ENCODE measurements at regions of chr12 and their contacts with region 1.

Region 1: DNA sequence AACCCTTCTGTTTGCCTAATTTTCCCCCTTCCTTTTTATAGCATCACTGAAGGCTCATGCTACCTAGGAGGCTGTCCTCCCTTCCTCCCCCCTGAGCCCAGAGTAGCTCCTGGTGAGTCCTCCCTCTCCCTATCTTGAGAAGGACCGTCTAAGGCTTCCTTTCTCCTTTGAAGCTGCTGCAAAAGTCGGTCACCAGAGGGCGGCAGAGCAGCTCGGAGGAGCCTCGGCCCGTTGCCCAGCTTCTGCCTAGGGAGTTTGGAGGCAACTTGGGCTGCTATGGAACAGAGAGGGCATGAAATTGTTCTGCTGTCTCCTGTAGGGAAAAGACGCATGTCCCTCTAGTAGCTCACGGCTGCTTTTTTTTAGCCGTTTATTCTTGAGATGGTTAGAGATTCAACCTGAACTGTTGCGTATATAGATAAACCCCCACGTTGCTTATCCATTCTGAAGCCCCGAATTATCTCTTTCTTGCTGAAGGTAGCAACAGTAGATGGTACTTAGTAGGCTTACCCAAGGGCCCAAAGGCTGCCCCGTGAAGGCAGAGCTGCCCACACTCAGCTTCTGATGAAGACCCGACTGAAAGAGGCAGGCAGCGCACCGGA is 5.7 kb downstream of the WNT5B start:
- DNase-seq: peak; percentile 70
- CTCF ChIP-seq: peak; percentile 86

Region 2: DNA sequence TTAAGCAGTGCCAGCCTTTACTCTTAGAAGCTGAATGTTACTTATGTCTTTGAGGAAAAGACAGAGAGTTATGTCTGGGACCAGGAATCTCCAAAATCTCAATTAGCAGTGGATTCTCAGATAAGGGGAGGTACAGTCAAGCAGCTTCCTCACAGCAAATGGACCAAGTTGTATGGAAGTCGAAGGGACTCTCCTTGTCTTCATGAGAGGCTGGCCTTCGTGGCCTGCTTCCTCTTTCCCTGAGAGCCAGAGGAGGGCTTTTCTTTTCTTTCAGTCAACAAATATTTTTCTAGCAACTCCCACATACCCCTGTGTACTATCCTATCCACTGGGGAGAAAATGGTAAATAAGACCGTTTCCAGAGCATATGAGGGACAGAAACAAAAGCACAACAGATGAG is 12.3 kb before region 1 on chr12:
- CTCF ChIA-PET with region 1: interaction called, 24 read pairs
- POLR2A ChIA-PET with region 1: no interaction called
- DNase-seq: no peak
- CTCF ChIP-seq: no peak

Region 3: DNA sequence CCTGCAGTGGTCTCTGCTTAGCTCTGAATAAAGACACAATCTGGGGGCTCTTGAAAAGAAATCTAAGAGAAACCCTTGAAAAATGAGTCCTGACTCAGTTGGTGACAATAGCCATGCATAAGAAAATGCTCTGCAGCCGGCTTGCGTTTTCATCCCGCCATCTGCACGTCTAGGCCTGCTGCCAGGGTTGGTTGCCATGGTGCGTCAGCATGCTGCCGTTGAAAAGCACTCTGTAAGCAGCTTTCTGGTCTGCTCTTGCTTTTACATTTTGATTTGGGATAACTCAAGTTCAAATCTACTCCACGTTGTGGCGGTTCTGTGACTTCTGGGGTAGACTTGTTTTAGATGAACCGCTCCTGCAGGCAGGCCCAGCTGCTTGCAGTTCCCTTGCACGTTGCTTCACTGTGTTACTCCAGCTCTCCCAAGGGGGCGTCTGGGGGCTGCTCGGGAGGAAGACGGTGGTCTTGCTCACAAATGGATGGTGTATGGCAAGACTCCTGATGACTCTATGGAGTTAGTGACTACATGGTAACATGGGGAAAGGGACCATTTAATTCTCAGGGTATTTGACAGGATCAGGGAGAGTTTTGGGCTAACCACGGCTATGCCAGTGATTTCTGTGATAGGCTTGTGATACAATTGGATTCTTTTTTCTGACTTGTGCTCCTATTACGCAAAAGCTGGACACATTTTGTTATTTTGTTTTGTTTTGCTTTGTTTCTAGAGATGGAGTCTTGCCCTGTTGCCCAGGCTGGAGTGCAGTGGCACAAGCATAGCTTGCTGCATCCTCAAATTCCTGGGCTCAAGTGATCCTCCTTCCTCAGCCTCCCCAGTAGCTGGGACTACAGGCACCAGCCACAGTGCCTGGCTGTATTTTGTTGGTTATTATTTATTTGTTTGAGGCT is 10.1 kb after region 1 on chr12:
- CTCF ChIA-PET with region 1: interaction called, 106 read pairs
- POLR2A ChIA-PET with region 1: no interaction called
- DNase-seq: no peak
- CTCF ChIP-seq: no peak

Region 4: DNA sequence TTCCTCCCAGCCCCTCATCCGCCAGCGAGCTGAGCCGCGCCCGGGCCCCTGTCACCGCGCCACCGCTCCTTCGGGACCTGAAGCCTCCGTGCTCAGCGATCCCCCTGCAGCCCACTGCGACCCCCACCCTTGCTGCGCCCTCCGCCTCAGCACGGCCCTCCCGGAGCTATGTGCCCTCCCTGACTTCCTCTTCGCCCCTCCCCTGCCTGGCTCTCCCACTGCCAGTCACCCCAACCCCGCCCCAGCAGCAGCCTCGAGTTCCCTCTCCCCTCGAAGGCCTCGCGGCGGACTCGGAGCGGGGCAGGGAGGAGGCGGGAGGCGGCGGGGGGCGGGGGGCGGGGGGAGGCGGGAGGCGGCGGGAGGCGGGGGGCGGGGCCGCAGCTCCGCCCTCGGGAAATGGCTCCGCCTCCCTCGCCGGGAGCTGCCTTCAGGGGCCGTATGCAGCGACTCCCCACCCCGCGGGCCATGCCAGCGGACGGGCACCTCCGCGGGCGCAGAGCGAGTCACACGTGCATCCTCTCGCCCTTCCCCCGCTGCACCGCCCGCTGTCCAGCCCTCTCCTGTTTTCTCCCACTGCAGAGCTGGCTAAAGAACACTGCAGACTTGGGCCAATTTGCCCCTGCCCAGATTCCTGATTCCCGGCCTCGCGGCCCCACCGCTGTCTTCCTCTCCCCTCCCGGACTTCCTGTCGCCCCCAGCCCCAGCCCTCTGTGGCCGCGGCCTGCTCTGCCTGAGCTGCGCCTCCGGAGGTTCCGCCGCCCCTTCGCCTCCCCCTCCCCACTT is 27.1 kb after region 1 on chr12:
- CTCF ChIA-PET with region 1: interaction called, 106 read pairs
- POLR2A ChIA-PET with region 1: no interaction called
- DNase-seq: peak; percentile 88
- CTCF ChIP-seq: no peak